Tibial artery (tissue), 4 donors: ENCODE measurements at regions of chr15 and their contacts with region 1.

Region 1: GRCh38 chr15:82647045-82647834 is at the start of gene CPEB1:
- DNase-seq: peak; percentile 38 to 81
- H3K4me3 ChIP-seq: peak within 1 kb of the TSS; percentile 56 to 79
- H3K27ac ChIP-seq: peak within 1 kb of the TSS; percentile 54 to 61
- H3K4me1 ChIP-seq: peaks cover 0 to 25% (median 22%) of the 10 kb centered on the region in 4 donors
- H3K27me3 ChIP-seq: peaks cover 0 to 36% of the 10 kb centered on the region in 2 donors
- CTCF ChIP-seq: peak in 1 of 2 experiments; percentile 12

Region 2: GRCh38 chr15:82540055-82540983 is 106.9 kb before region 1 on chr15 and contains the start of gene RPS17:
- intact Hi-C with region 1: loop called (anchors 10 kb)
- DNase-seq: peak; percentile 96 to 98
- H3K4me3 ChIP-seq: peak within 1 kb of the TSS; percentile 77 to 83
- H3K27ac ChIP-seq: peak within 1 kb of the TSS; percentile 87
- H3K4me1 ChIP-seq: peaks cover 0 to 34% (median 13%) of the 10 kb centered on the region in 4 donors
- H3K27me3 ChIP-seq: no peaks in the 10 kb centered on the region
- CTCF ChIP-seq: peak; percentile 99